GM23248 (cell line): ENCODE measurements at regions of chr5 and their contacts with region 1.

Region 1: GRCh38 chr5:154610321-154611154 is 132.5 kb upstream of the HAND1 start:
- DNase-seq: peak; percentile 87
- H3K4me3 ChIP-seq: peak overlapping the region; percentile 61
- H3K27ac ChIP-seq: no peak overlapping the region
- H3K4me1 ChIP-seq: 0 out of 2 replicates have a peak, but pooled peaks cover 6% of the 10 kb centered on the region
- H3K27me3 ChIP-seq: peaks cover 26% of the 10 kb centered on the region

Region 2: DNA sequence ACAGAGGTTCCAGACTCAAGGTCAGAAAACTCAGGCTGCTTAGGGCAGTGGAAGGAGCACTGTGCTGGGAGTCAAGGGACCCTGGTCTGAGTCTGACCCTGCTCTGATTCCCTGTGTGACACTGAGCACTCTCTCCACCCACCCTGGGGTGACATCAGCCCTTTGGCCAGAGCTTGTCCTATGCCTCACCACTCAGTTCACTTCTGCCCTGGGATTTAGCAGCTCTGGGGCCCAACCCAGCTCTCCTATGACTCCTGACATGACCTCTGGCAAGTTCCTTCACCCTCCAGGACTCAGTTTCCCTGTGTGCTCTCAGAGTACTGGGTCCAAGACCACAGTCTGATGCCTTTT is 635.8 kb before region 1 on chr5:
- in situ Hi-C with region 1: loop called (anchors 25 kb)
- DNase-seq: peak; percentile 35
- H3K4me3 ChIP-seq: no peak overlapping the region
- H3K27ac ChIP-seq: no peak overlapping the region
- H3K4me1 ChIP-seq: no peaks in the 10 kb centered on the region
- H3K27me3 ChIP-seq: no peaks in the 10 kb centered on the region

Region 3: DNA sequence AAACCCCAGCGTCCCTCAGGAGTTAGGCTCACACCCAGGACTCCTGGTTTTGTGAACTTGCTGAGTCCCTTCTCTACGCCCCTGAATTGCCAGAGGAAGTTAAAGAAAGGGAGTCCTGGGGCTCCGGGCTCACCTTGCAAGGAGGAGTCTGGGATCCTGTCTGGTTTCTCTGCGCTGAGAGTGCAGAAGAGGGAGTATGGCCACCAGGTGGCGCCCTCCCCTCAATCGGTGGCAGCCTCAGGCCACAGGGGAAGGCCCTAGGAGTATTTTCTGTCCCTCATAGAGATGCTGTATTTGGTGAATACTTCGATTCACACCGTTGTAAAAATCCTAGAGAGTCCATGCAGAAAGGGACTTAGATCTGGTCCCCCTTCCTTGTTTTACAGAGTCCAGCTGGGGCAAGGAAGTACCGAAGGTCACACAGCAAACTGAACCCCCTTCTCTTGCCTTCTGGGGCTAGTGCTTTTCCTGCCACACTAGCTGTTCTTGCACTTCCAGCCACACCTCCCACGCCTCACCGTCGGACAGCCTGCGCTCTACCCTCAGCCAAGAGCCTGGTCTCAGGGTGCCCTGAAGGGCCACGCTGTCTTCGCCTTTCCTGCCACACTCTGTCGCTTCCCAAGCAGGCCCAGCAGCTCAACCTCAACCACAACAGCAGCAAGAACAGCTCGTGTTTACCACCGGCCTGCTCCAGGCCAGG is 142.7 kb before region 1 on chr5:
- in situ Hi-C with region 1: loop called (anchors 5 kb)
- DNase-seq: peak; percentile 80
- H3K4me3 ChIP-seq: no peak overlapping the region
- H3K27ac ChIP-seq: no peak overlapping the region
- H3K4me1 ChIP-seq: no peaks in the 10 kb centered on the region
- H3K27me3 ChIP-seq: peaks cover 31% of the 10 kb centered on the region